ENCODE measurements at regions of chr19 and their contacts with region 1.

Region 1: GRCh38 chr19:57578487-57579205 is at the start of gene ZNF416:
- DNase-seq: peak; percentile 97 to 98
- H3K4me3 ChIP-seq: peak within 1 kb of the TSS; percentile 83
- H3K4me3 Mint-ChIP-seq: peak within 1 kb of the TSS; percentile 77
- H3K27ac Mint-ChIP-seq: peak within 1 kb of the TSS; percentile 37
- H3K4me1 ChIP-seq: no peaks in the 10 kb centered on the region
- H3K4me1 Mint-ChIP-seq: no peaks in the 10 kb centered on the region
- H3K27me3 ChIP-seq: no peaks in the 10 kb centered on the region
- H3K27me3 Mint-ChIP-seq: no peaks in the 10 kb centered on the region
- CTCF ChIP-seq: peak in 1 of 2 experiments; percentile 43
- total RNA-seq, gene ZNF416: 5.5 and 6.1 TPM in 2 replicates

Region 2: DNA sequence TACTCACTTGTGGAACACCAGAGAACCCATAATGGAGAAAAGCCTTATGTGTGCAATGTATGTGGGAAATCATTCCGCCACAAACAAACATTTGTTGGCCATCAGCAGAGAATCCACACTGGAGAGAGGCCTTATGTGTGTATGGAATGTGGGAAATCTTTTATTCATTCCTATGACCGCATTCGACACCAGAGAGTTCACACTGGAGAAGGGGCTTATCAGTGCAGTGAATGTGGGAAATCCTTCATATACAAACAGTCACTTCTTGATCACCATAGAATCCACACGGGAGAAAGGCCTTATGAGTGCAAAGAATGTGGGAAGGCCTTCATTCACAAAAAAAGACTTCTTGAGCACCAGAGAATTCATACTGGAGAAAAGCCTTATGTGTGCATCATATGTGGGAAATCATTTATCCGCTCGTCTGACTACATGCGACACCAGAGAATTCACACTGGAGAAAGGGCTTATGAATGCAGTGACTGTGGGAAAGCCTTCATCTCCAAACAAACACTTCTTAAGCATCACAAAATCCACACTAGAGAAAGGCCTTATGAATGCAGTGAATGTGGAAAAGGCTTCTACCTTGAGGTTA is 40.6 kb before region 1 on chr19:
- CTCF ChIA-PET with region 1: no interaction called
- POLR2A ChIA-PET with region 1: no interaction called
- intact Hi-C with region 1: no loop called
- DNase-seq: no peak
- H3K4me3 ChIP-seq: no peak overlapping the region
- H3K4me3 Mint-ChIP-seq: no peak overlapping the region
- H3K27ac Mint-ChIP-seq: no peak overlapping the region
- H3K4me1 ChIP-seq: no peaks in the 10 kb centered on the region
- H3K4me1 Mint-ChIP-seq: no peaks in the 10 kb centered on the region
- H3K27me3 ChIP-seq: no peaks in the 10 kb centered on the region
- H3K27me3 Mint-ChIP-seq: no peaks in the 10 kb centered on the region
- CTCF ChIP-seq: no peak

Region 3: GRCh38 chr19:57559404-57560025 is 19.1 kb before region 1 on chr19 and contains the start of gene ZNF550:
- CTCF ChIA-PET with region 1: no interaction called
- POLR2A ChIA-PET with region 1: no interaction called
- intact Hi-C with region 1: loop called (anchors 1 kb)
- DNase-seq: peak; percentile 89 to 90
- H3K4me3 ChIP-seq: peak within 1 kb of the TSS; percentile 91
- H3K4me3 Mint-ChIP-seq: peak within 1 kb of the TSS; percentile 99
- H3K27ac Mint-ChIP-seq: peak within 1 kb of the TSS; percentile 94
- H3K4me1 ChIP-seq: no peaks in the 10 kb centered on the region
- H3K4me1 Mint-ChIP-seq: peaks cover 11% of the 10 kb centered on the region
- H3K27me3 ChIP-seq: no peaks in the 10 kb centered on the region
- H3K27me3 Mint-ChIP-seq: no peaks in the 10 kb centered on the region
- CTCF ChIP-seq: no peak
- total RNA-seq, gene ZNF550: 11.2 and 11.5 TPM in 2 replicates

Region 4: DNA sequence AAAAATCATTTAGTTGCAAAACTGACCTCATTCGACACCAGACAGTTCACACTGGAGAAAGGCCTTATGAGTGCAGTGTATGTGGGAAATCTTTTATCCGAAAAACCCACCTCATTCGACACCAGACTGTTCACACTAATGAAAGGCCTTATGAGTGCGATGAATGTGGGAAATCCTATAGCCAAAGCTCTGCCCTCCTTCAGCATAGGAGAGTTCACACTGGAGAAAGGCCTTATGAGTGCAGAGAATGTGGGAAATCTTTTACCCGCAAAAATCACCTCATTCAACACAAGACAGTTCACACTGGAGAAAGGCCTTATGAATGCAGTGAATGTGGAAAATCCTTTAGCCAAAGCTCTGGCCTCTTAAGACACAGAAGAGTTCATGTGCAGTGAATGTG is 28.3 kb after region 1 on chr19:
- CTCF ChIA-PET with region 1: no interaction called
- POLR2A ChIA-PET with region 1: no interaction called
- intact Hi-C with region 1: no loop called
- DNase-seq: no peak
- H3K4me3 ChIP-seq: no peak overlapping the region
- H3K4me3 Mint-ChIP-seq: no peak overlapping the region
- H3K27ac Mint-ChIP-seq: no peak overlapping the region
- H3K4me1 ChIP-seq: no peaks in the 10 kb centered on the region
- H3K4me1 Mint-ChIP-seq: no peaks in the 10 kb centered on the region
- H3K27me3 ChIP-seq: no peaks in the 10 kb centered on the region
- H3K27me3 Mint-ChIP-seq: no peaks in the 10 kb centered on the region
- CTCF ChIP-seq: no peak

Region 5: GRCh38 chr19:57632987-57633831 is 54.6 kb after region 1 on chr19 and contains the start of gene ZNF211:
- CTCF ChIA-PET with region 1: no interaction called
- POLR2A ChIA-PET with region 1: no interaction called
- intact Hi-C with region 1: loop called (anchors 1 kb)
- DNase-seq: peak; percentile 94
- H3K4me3 ChIP-seq: peak within 1 kb of the TSS; percentile 95
- H3K4me3 Mint-ChIP-seq: peak within 1 kb of the TSS; percentile 86
- H3K27ac Mint-ChIP-seq: peak within 1 kb of the TSS; percentile 81
- H3K4me1 ChIP-seq: 0 out of 2 replicates have a peak, but pooled peaks cover 7% of the 10 kb centered on the region
- H3K4me1 Mint-ChIP-seq: peaks cover 12% of the 10 kb centered on the region
- H3K27me3 ChIP-seq: no peaks in the 10 kb centered on the region
- H3K27me3 Mint-ChIP-seq: no peaks in the 10 kb centered on the region
- CTCF ChIP-seq: no peak
- total RNA-seq, gene ZNF211: 10.5 and 13.3 TPM in 2 replicates

Region 6: GRCh38 chr19:57664269-57665127 is 85.9 kb after region 1 on chr19:
- CTCF ChIA-PET with region 1: no interaction called
- POLR2A ChIA-PET with region 1: no interaction called
- intact Hi-C with region 1: no loop called
- DNase-seq: peak; percentile 60 to 65
- H3K4me3 ChIP-seq: peak overlapping the region; percentile 62
- H3K4me3 Mint-ChIP-seq: peak overlapping the region; percentile 77
- H3K27ac Mint-ChIP-seq: no peak overlapping the region
- H3K4me1 ChIP-seq: no peaks in the 10 kb centered on the region
- H3K4me1 Mint-ChIP-seq: no peaks in the 10 kb centered on the region
- H3K27me3 ChIP-seq: no peaks in the 10 kb centered on the region
- H3K27me3 Mint-ChIP-seq: peaks cover 9% of the 10 kb centered on the region
- CTCF ChIP-seq: no peak

Region 7: GRCh38 chr19:57746580-57747471 is 168.2 kb after region 1 on chr19 and contains the start of gene ZNF776:
- CTCF ChIA-PET with region 1: no interaction called
- POLR2A ChIA-PET with region 1: no interaction called
- intact Hi-C with region 1: loop called (anchors 2 kb)
- DNase-seq: peak; percentile 86 to 89
- H3K4me3 ChIP-seq: peak within 1 kb of the TSS; percentile 100
- H3K4me3 Mint-ChIP-seq: peak within 1 kb of the TSS; percentile 100
- H3K27ac Mint-ChIP-seq: peak within 1 kb of the TSS; percentile 99
- H3K4me1 ChIP-seq: peaks cover 4% of the 10 kb centered on the region; the same call in 1 of the 2 replicates
- H3K4me1 Mint-ChIP-seq: peaks cover 12% of the 10 kb centered on the region
- H3K27me3 ChIP-seq: no peaks in the 10 kb centered on the region
- H3K27me3 Mint-ChIP-seq: no peaks in the 10 kb centered on the region
- CTCF ChIP-seq: no peak
- total RNA-seq, gene ZNF776: 15.6 and 16.0 TPM in 2 replicates

Region 8: GRCh38 chr19:57819475-57820148 is 241.0 kb after region 1 on chr19:
- CTCF ChIA-PET with region 1: interaction called, 13 read pairs
- POLR2A ChIA-PET with region 1: no interaction called
- intact Hi-C with region 1: loop called (anchors 5 kb)
- DNase-seq: peak; percentile 89 to 95
- H3K4me3 ChIP-seq: peak overlapping the region; percentile 48
- H3K4me3 Mint-ChIP-seq: peak overlapping the region; percentile 98
- H3K27ac Mint-ChIP-seq: peak overlapping the region; percentile 94
- H3K4me1 ChIP-seq: peaks cover 59% of the 10 kb centered on the region
- H3K4me1 Mint-ChIP-seq: peaks cover 62% of the 10 kb centered on the region
- H3K27me3 ChIP-seq: no peaks in the 10 kb centered on the region
- H3K27me3 Mint-ChIP-seq: no peaks in the 10 kb centered on the region
- CTCF ChIP-seq: peak in 1 of 2 experiments; percentile 16

Measured in Caco-2 (cell line).